Psoas muscle (tissue), 8 donors: ENCODE measurements at regions of chr10 and their contacts with region 1.

Region 1: DNA sequence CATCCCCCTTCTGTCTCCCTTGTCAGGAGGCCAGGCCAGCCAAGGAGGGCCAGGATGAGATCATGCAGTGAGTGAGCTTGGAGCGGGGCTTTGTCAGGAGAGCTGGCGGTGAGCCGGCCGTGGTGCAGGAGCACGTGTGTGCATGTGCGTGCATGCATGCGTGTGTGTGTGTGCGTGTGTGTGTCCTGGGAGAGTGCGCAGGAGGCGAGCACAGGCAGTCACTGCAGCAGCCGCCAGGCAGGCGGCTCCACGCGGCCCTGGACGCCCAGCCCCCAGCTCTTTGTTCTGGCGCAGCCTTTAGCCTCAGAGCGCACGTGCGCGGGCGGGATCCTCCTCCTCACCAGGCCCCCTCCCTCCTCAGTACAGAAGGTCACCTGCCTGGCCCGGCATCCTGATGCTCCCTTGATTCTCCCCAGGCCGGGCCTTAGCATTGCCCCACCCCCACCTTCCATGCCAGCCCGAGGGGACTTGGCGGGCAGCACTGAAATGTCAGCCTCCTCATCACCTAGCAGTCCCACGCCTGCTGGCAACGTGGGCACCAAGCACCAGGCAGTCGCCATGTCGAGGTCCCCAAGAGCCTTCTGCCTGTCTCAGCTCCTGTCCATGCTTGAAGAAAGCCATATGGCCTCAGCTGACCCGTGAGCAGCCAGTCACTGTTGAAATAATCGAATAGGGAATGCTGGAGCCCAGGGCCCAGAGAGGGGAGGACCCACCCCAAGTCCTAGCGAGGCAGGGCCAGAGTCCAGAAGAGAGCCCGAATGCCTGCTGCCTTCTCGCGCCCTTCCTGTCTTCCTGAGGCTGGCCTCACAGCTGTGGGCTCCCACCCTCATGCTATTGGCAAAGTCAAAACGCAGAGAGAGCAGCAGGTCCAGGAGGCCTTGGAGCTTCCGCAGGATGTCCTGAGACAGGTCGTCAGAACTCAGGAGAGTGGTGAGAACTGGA is 125.9 kb upstream of the PPIF start:
- DNase-seq: peak; percentile 79 to 85
- ATAC-seq: peak; percentile 42 to 65 (median 54)
- H3K4me3 ChIP-seq: no peak overlapping the region
- H3K27ac ChIP-seq: peak overlapping the region; percentile 63
- H3K4me1 ChIP-seq: peaks cover 20% of the 10 kb centered on the region
- H3K27me3 ChIP-seq: no peaks in the 10 kb centered on the region
- CTCF ChIP-seq: no peak

Region 2: DNA sequence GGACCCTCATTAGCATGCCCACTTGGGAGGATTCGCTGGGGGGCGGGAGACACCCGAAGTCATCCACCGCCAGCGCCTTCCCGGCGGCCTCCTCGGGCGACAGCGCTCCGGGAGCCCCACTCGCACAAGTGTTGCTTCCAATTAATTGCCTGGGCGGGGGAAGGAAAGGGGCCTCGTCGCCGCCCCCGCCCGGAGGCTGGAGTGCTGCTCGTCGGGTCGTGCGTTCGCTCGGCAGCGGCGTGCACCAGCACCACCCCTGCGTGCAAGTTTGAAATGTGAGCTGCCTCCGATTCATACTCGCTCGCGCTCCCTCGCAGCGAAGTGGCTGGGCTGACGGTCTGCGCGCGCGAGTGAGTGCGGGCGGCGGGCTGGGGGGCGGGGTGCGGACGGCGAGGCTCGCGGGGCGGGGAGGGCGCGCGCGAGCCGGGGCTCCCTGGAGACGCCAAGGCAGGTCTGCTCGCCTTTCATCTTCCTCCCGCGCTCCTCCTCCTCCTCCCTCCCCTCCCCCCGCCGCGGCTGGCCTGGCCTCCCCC is 21.3 kb after region 1 on chr10:
- intact Hi-C with region 1: loop called in 1 of 2 experiments (anchors 2 kb)
- DNase-seq: peak; percentile 71 to 80
- ATAC-seq: peak; percentile 50 to 68 (median 62)
- H3K4me3 ChIP-seq: peak overlapping the region; percentile 67
- H3K27ac ChIP-seq: peak overlapping the region; percentile 63
- H3K4me1 ChIP-seq: peaks cover 65% of the 10 kb centered on the region
- H3K27me3 ChIP-seq: no peaks in the 10 kb centered on the region
- CTCF ChIP-seq: no peak